ENCODE measurements at regions of chr3 and their contacts with region 1.

Region 1: DNA sequence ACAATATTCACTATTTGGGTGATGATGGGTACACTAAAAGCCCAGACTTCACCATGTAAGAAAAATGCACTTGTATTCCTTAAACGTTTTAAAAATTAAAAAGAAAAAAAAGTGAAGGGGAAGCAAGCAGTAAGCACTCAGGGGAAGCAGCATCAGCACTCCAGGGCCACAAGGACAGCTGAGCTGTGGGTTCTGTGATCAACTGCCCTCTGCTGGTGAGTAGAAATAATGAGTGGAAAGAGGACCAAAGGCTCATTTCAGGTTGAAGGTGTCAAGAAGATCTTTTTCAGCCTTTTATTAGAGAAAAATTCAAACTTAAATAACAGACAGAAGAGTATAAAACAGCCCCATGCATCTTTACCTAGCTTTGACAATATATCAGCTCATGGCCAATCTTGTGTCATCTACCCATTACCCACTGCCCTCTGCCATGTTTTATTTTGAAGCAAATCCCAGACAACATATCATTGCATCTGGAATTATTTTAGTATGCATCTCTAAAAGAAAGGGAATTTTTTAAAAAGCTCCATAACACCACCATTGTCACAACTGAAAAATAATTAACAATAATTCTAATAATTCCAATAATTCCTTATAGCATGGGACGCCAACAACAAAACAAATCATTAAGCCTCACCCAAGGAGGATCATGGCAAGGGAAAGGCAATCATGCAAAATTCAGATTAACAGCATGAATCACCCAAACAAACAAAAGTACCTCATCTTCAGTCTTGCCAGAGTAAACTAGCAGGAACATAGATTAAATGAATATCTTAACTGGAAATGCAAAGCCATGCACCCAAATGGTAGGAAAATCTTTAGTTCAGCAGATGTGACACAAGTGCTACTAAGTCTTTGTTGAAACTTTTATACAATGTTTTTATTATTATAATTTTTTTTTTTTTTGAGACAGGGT is 42.5 kb downstream of the TAMM41 start:
- DNase-seq: no peak
- H3K4me3 ChIP-seq: no peak overlapping the region
- H3K27ac ChIP-seq: no peak overlapping the region
- H3K4me1 ChIP-seq: peaks cover 21% of the 10 kb centered on the region
- H3K27me3 ChIP-seq: no peaks in the 10 kb centered on the region
- CTCF ChIP-seq: peak in 2 of 3 experiments; percentile 63 to 77
- POLR2A ChIP-seq: no peak

Region 2: DNA sequence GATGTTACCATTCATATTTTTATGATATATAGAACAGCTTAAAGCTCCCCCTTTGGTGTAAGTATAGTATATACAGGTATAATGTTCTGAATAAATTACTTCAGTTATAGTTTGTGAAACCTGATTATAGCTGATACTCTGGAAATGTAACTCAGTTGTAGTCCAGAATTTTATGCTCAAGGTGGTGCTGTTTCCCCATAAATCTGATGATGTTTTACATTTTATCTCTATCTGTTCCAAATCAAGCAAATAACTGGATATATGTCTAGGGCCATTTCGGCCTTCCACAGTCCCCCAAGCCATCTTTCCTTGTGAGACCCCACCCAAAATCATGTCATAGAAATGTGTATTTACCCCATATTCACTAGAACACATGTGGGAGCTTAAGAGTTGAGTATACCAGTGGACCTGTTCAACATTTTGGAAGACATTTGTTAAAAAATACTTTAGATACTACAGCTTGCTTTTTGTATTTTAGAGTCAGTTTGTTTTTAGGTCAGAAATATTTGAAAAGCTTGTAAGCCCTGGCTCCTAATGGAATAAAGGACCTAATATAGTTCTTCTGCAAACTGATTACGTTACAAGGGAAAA is 424.9 kb before region 1 on chr3:
- intact Hi-C with region 1: loop called (anchors 10 kb)
- DNase-seq: no peak
- H3K4me3 ChIP-seq: peak overlapping the region in 1 of 2 donors; percentile 4
- H3K27ac ChIP-seq: no peak overlapping the region
- H3K4me1 ChIP-seq: no peaks in the 10 kb centered on the region
- H3K27me3 ChIP-seq: no peaks in the 10 kb centered on the region
- CTCF ChIP-seq: peak; percentile 54 to 72 (median 65)
- POLR2A ChIP-seq: no peak

Region 3: GRCh38 chr3:12027184-12027846 is 223.1 kb after region 1 on chr3:
- intact Hi-C with region 1: no loop called
- DNase-seq: no peak
- H3K4me3 ChIP-seq: no peak overlapping the region
- H3K27ac ChIP-seq: no peak overlapping the region
- H3K4me1 ChIP-seq: no peaks in the 10 kb centered on the region
- H3K27me3 ChIP-seq: no peaks in the 10 kb centered on the region
- CTCF ChIP-seq: no peak
- POLR2A ChIP-seq: no peak

Measured in vagina (tissue), 2 donors.